ENCODE measurements at regions of chr2 and their contacts with region 1.

Region 1: DNA sequence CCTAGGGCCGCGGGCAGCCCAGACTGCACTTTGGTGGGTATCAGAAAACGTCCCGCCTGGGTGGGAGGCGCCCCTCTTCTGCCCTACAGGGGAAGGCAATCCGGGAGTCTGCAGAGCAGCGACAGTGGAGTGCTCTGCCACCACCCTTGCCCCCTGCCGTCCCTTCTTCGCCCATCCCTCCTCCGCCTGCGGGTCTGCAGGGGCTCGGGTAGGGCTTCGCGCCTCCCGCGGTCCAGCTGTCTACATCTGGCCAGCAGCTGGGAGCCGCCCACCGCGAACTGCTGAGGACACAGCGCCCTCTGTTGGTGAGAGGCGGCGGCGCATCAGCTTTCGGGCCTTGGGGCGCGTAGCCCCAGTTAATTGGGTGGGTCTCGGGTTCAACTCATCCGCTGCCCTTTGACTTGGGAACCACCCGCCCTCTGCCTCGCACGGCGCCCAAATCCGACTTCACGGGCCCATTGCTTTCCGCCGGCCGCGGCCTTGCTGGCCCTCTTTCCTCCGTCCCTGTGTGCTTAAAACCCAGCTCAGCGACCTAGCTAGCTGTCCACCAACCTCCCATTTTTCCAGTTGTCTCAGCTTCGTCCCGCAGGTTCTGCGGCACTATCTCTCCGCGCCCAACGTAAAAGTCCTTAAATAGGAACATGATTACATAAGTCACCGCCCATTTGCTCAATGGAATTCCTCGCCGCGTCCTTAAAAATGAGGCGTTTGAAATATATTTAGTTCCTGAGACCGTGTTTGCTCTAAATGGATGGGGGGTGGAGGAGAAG is 17.6 kb downstream of the WNT10A start:
- DNase-seq: peak; percentile 33
- ATAC-seq: peak; percentile 84
- H3K4me3 ChIP-seq: peak overlapping the region in 2 of 3 experiments; percentile 13 to 51; a peak in 2 of 6 replicates
- H3K27ac ChIP-seq: no peak overlapping the region
- H3K4me1 ChIP-seq: peaks cover 48% of the 10 kb centered on the region
- H3K27me3 ChIP-seq: peaks cover 24 to 73% of the 10 kb centered on the region in 2 experiments; a peak in 4 of 5 replicates
- CTCF ChIP-seq: peak; percentile 100
- EP300 ChIP-seq: no peak
- POLR2A ChIP-seq: no peak
- RAD21 ChIP-seq: peak; percentile 93

Region 2: DNA sequence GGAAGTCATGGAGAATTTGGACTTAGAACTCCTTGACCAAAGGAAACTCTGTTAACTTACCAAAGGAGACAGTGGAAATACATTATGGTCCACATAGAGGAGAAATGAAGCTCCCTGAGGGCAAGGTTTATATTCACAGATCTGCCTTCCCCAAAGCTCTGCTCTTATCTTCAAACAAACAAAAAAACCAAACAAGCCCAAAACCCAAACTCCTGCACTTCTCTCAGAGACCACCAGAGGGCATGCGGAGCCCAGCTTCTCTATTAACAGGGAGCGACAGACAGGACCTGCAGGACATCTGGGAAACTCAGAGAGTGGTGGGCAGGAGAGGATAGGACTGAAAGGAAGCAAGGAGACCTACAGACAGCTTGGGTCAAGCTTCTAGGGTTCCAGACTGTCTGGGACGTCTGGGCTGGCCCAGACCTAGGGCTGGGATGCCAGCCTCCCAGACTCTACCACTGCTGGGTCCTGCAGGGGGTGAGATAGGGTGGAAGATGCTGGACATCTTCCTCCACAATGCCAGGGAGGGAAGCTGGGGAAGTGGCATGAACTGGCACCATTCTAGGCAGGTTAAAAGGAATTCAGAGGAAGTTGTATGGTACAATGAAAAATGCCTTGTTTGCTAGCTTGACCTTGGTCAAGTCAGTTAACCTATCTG is 21.6 kb before region 1 on chr2:
- CTCF ChIA-PET with region 1: interaction called, 58 read pairs
- POLR2A ChIA-PET with region 1: interaction called, 3 read pairs
- in situ Hi-C with region 1: no loop called
- intact Hi-C with region 1: loop called (anchors 1 kb)
- DNase-seq: peak; percentile 82
- ATAC-seq: peak; percentile 53
- H3K4me3 ChIP-seq: no peak overlapping the region
- H3K27ac ChIP-seq: no peak overlapping the region
- H3K4me1 ChIP-seq: 0 out of 2 replicates have a peak, but pooled peaks cover 9% of the 10 kb centered on the region
- H3K27me3 ChIP-seq: peaks cover 22 to 93% of the 10 kb centered on the region in 2 experiments; a peak in 4 of 5 replicates
- CTCF ChIP-seq: peak; percentile 90
- EP300 ChIP-seq: no peak
- POLR2A ChIP-seq: no peak
- RAD21 ChIP-seq: peak; percentile 76

Region 3: GRCh38 chr2:219095406-219095935 is 197.2 kb after region 1 on chr2:
- CTCF ChIA-PET with region 1: no interaction called
- POLR2A ChIA-PET with region 1: no interaction called
- in situ Hi-C with region 1: no loop called
- intact Hi-C with region 1: no loop called
- DNase-seq: no peak
- ATAC-seq: no peak
- H3K4me3 ChIP-seq: no peak overlapping the region
- H3K27ac ChIP-seq: no peak overlapping the region
- H3K4me1 ChIP-seq: peaks cover 12% of the 10 kb centered on the region
- H3K27me3 ChIP-seq: no peaks in the 10 kb centered on the region; a peak in 1 of 5 replicates
- CTCF ChIP-seq: no peak
- EP300 ChIP-seq: no peak
- POLR2A ChIP-seq: no peak
- RAD21 ChIP-seq: no peak